ENCODE measurements at regions of chr11 and their contacts with region 1.

Region 1: GRCh38 chr11:73184953-73185671 is 33.0 kb upstream of the P2RY2 start:
- DNase-seq: peak; percentile 61 to 80
- ATAC-seq: peak; percentile 57 to 68
- H3K4me3 ChIP-seq: no peak overlapping the region
- H3K27ac ChIP-seq: peak overlapping the region; percentile 53 to 79 (median 70)
- H3K4me1 ChIP-seq: peaks cover 35 to 47% of the 10 kb centered on the region in 2 donors
- H3K27me3 ChIP-seq: no peaks in the 10 kb centered on the region
- CTCF ChIP-seq: peak; percentile 88 to 94 (median 93)
- POLR2A ChIP-seq: no peak

Region 2: GRCh38 chr11:73236854-73237253 is 51.7 kb after region 1 on chr11:
- in situ Hi-C with region 1: loop called in 3 of 4 experiments (anchors 5 kb)
- intact Hi-C with region 1: loop called (anchors 1 kb)
- DNase-seq: peak; percentile 64 to 91
- ATAC-seq: peak; percentile 39 to 42
- H3K4me3 ChIP-seq: no peak overlapping the region
- H3K27ac ChIP-seq: peak overlapping the region; percentile 92 to 98 (median 96)
- H3K4me1 ChIP-seq: peaks cover 62 to 81% of the 10 kb centered on the region in 2 donors
- H3K27me3 ChIP-seq: no peaks in the 10 kb centered on the region
- CTCF ChIP-seq: peak; percentile 59 to 74 (median 63)
- POLR2A ChIP-seq: no peak

Region 3: DNA sequence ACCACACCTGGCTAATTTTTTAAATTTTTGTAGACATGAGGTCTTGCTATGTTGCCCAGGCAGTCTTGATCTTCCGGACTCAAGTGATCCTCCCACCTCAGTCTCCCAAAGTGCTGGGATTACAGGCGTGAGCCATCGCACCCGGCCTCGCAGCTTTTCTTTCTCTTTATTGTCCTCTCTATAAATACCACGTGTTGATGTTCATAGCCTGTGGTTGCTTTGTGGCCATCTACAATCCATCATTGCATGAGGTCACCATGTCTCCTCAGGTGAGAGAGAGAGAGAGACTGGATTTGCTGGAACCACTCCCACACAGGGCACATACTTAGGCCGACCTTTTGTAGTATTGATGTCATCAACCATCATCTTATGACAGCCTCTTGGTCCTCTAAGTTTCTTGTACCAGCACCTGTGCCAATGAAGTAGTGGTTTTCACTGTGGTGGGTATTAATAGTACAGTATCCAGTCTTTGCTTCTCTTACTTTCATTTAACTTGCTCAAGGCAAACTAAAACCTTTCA is 64.1 kb after region 1 on chr11:
- in situ Hi-C with region 1: loop called (anchors 5 kb)
- intact Hi-C with region 1: no loop called
- DNase-seq: peak in 1 of 2 donors; percentile 51
- ATAC-seq: peak; percentile 53 to 83
- H3K4me3 ChIP-seq: no peak overlapping the region
- H3K27ac ChIP-seq: peak overlapping the region; percentile 19 to 67 (median 55)
- H3K4me1 ChIP-seq: peaks cover 0 to 5% of the 10 kb centered on the region in 2 donors
- H3K27me3 ChIP-seq: no peaks in the 10 kb centered on the region
- CTCF ChIP-seq: no peak
- POLR2A ChIP-seq: no peak

Region 4: GRCh38 chr11:73295231-73295995 is 110.3 kb after region 1 on chr11:
- in situ Hi-C with region 1: loop called in 1 of 4 experiments (anchors 10 kb)
- intact Hi-C with region 1: no loop called
- DNase-seq: no peak
- ATAC-seq: no peak
- H3K4me3 ChIP-seq: no peak overlapping the region
- H3K27ac ChIP-seq: no peak overlapping the region
- H3K4me1 ChIP-seq: no peaks in the 10 kb centered on the region
- H3K27me3 ChIP-seq: no peaks in the 10 kb centered on the region
- CTCF ChIP-seq: peak; percentile 43 to 72 (median 66)
- POLR2A ChIP-seq: no peak

Region 5: DNA sequence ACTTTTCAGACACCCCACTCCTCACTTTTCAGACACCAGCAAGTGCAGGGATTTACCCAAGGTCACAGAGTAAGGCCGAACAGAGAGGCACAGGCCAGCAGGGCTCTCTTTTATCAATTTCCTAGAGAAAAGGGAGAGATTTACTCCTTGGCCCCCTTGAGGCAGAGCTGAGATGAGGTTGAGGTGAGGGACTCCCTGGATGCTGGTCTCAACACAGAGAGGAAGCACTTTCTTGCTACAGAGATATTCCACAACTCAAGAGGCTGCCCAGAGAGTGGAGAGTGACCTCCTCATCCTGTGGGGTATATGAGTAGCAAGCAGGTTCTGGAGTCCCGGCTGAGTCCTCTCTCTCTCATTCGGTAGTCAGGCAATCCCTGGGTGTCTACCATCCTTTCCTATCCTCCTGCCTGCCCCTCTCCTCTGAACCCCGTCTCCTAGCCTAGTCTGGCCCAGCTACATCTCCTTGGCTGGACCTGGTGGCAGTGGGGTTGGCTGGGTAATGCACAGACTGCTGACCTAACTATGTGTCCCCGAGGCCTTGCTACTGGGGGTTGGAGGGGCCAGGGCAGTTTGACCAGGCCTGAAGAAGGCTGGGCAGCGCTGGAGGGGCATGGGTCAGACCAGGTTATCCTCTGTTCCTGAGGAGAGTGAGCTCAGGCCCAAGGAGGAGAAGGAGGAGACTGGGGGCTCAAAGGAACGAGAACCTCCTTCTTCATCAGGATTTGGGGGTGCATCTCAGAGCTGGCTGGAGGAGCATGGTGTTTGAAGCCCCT is 121.1 kb after region 1 on chr11:
- in situ Hi-C with region 1: no loop called
- intact Hi-C with region 1: no loop called
- DNase-seq: no peak
- ATAC-seq: no peak
- H3K4me3 ChIP-seq: no peak overlapping the region
- H3K27ac ChIP-seq: peak overlapping the region in 1 of 4 donors; percentile 83
- H3K4me1 ChIP-seq: peaks cover 4 to 11% of the 10 kb centered on the region in 2 donors
- H3K27me3 ChIP-seq: peaks cover 0 to 2% (median 0%) of the 10 kb centered on the region in 3 donors
- CTCF ChIP-seq: no peak
- POLR2A ChIP-seq: no peak

Region 6: GRCh38 chr11:73661035-73661628 is 476.0 kb after region 1 on chr11:
- in situ Hi-C with region 1: no loop called
- intact Hi-C with region 1: no loop called
- DNase-seq: peak; percentile 72 to 78
- ATAC-seq: peak; percentile 90 to 91
- H3K4me3 ChIP-seq: peak overlapping the region; percentile 28 to 49 (median 40)
- H3K27ac ChIP-seq: no peak overlapping the region
- H3K4me1 ChIP-seq: peaks cover 12 to 27% of the 10 kb centered on the region in 2 donors
- H3K27me3 ChIP-seq: no peaks in the 10 kb centered on the region
- CTCF ChIP-seq: peak; percentile 96 to 99 (median 98)
- POLR2A ChIP-seq: no peak

Measured in gastrocnemius medialis (tissue), 4 donors.